ENCODE measurements at regions of chr2 and their contacts with region 1.

Region 1: DNA sequence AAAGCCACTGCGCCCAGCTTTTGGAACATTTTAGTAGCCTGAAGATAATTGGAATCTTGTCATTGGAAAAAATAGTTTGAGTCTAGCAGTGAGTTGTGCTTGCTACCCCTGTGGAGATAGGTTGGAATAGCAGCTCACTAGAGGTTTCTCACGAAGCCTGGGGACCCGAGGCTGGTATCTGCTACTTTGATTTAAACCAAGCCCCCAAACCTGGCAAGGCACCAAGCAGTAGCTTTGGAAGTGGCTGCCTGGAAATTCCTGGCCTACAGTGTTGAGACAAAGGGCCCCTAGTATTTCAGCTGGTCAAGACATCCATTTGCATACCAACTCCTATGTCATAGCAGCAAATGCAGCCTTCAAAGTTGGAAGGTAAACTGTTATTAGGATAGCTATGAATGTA is 42.1 kb downstream of the NOP58 start:
- DNase-seq: no peak
- H3K4me3 ChIP-seq: no peak overlapping the region
- H3K4me3 Mint-ChIP-seq: no peak overlapping the region
- H3K27ac Mint-ChIP-seq: no peak overlapping the region
- H3K4me1 ChIP-seq: no peaks in the 10 kb centered on the region
- H3K4me1 Mint-ChIP-seq: no peaks in the 10 kb centered on the region
- H3K27me3 ChIP-seq: no peaks in the 10 kb centered on the region
- H3K27me3 Mint-ChIP-seq: no peaks in the 10 kb centered on the region
- CTCF ChIP-seq: no peak

Region 2: DNA sequence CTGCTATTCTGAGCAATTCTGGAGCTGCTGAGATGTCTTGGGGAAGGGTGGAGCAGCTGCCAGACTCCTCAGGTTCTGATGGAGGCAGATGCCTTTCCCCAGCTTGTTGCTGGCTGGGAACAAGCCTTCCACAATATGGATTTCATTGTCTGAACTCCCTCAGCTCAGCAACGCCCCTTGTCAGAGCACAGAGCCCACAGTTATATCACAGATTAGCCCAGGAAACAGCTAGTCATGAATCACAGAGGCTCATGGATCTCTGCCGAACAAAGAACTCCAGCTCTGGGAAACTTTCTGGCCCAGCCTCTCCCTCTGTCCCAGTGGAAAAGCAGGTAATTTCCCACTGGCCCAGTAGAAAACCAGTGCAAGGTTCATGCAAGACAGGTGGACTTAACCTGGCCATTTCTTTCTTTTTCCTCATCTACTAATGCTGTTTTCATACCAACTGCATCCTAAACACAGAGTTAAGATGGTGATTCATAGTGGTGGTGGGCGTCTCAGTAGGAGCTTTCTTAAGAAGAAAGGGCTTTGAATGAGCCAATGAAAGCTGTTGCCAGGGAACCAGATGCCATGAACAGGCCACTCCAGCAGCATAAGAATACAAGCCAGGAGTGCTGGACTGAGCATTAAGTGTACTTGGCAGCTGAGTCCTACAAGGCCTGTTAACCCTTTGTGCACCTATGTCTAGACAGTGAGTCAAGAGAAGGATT is 243.4 kb before region 1 on chr2:
- CTCF ChIA-PET with region 1: no interaction called
- POLR2A ChIA-PET with region 1: no interaction called
- intact Hi-C with region 1: no loop called
- DNase-seq: no peak
- H3K4me3 ChIP-seq: no peak overlapping the region
- H3K4me3 Mint-ChIP-seq: no peak overlapping the region
- H3K27ac Mint-ChIP-seq: no peak overlapping the region
- H3K4me1 ChIP-seq: no peaks in the 10 kb centered on the region
- H3K4me1 Mint-ChIP-seq: no peaks in the 10 kb centered on the region
- H3K27me3 ChIP-seq: no peaks in the 10 kb centered on the region
- H3K27me3 Mint-ChIP-seq: no peaks in the 10 kb centered on the region
- CTCF ChIP-seq: no peak

Region 3: GRCh38 chr2:202196727-202197126 is 111.0 kb before region 1 on chr2:
- CTCF ChIA-PET with region 1: no interaction called
- POLR2A ChIA-PET with region 1: no interaction called
- intact Hi-C with region 1: no loop called
- DNase-seq: no peak
- H3K4me3 ChIP-seq: no peak overlapping the region
- H3K4me3 Mint-ChIP-seq: no peak overlapping the region
- H3K27ac Mint-ChIP-seq: no peak overlapping the region
- H3K4me1 ChIP-seq: no peaks in the 10 kb centered on the region
- H3K4me1 Mint-ChIP-seq: no peaks in the 10 kb centered on the region
- H3K27me3 ChIP-seq: no peaks in the 10 kb centered on the region
- H3K27me3 Mint-ChIP-seq: no peaks in the 10 kb centered on the region
- CTCF ChIP-seq: no peak

Region 4: GRCh38 chr2:202327858-202328257 is 20.2 kb after region 1 on chr2:
- CTCF ChIA-PET with region 1: no interaction called
- POLR2A ChIA-PET with region 1: no interaction called
- intact Hi-C with region 1: no loop called
- DNase-seq: no peak
- H3K4me3 ChIP-seq: no peak overlapping the region
- H3K4me3 Mint-ChIP-seq: no peak overlapping the region
- H3K27ac Mint-ChIP-seq: no peak overlapping the region
- H3K4me1 ChIP-seq: 0 out of 2 replicates have a peak, but pooled peaks cover 6% of the 10 kb centered on the region
- H3K4me1 Mint-ChIP-seq: no peaks in the 10 kb centered on the region
- H3K27me3 ChIP-seq: no peaks in the 10 kb centered on the region
- H3K27me3 Mint-ChIP-seq: no peaks in the 10 kb centered on the region
- CTCF ChIP-seq: no peak

Region 5: GRCh38 chr2:202339071-202339870 is 31.6 kb after region 1 on chr2:
- CTCF ChIA-PET with region 1: no interaction called
- POLR2A ChIA-PET with region 1: no interaction called
- intact Hi-C with region 1: no loop called
- DNase-seq: peak in 1 of 2 experiments; percentile 21
- H3K4me3 ChIP-seq: no peak overlapping the region
- H3K4me3 Mint-ChIP-seq: no peak overlapping the region
- H3K27ac Mint-ChIP-seq: no peak overlapping the region
- H3K4me1 ChIP-seq: no peaks in the 10 kb centered on the region
- H3K4me1 Mint-ChIP-seq: no peaks in the 10 kb centered on the region
- H3K27me3 ChIP-seq: no peaks in the 10 kb centered on the region
- H3K27me3 Mint-ChIP-seq: no peaks in the 10 kb centered on the region
- CTCF ChIP-seq: no peak

Region 6: DNA sequence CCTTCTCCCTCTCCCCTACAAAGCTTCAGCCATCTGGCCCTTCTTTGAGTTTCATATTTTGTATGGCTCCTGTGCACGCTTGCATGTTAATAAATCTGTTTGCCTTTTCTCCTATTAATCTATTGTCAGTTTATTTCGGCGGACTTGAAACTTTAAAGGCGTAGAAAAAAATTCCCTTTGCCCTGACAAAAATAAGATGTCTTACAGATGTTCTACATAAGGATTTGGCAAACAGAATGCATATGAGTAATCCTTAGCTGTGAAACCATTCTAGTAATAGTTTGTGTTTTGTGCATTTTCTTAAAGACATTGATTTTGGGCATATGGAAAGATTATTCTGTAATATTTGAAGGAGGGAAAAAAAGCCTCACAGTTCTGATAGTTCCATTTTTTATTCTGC is 53.4 kb after region 1 on chr2:
- CTCF ChIA-PET with region 1: no interaction called
- POLR2A ChIA-PET with region 1: no interaction called
- intact Hi-C with region 1: loop called (anchors 5 kb)
- DNase-seq: no peak
- H3K4me3 ChIP-seq: no peak overlapping the region
- H3K4me3 Mint-ChIP-seq: no peak overlapping the region
- H3K27ac Mint-ChIP-seq: peak overlapping the region; percentile 54
- H3K4me1 ChIP-seq: peaks cover 24% of the 10 kb centered on the region
- H3K4me1 Mint-ChIP-seq: peaks cover 13% of the 10 kb centered on the region
- H3K27me3 ChIP-seq: no peaks in the 10 kb centered on the region
- H3K27me3 Mint-ChIP-seq: no peaks in the 10 kb centered on the region
- CTCF ChIP-seq: no peak

Region 7: DNA sequence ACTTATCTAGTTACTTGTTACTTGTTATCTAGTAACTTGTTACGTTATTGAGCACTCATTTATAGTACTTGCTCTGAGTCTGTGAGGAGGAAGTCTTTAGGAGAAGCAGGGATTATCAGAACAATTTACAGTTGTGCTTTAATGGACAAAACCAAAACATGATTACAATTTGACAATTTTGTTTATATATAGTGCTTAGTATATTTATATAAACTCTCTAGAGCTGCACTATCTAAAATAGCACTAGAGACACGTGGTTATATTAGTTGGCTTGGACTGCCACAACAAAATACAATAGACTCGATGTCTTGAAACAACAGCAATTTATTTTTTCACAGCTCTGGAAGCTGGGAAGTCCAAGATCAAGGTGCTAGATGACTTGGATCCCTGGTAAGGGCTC is 146.8 kb after region 1 on chr2:
- CTCF ChIA-PET with region 1: no interaction called
- POLR2A ChIA-PET with region 1: interaction called, 12 read pairs
- intact Hi-C with region 1: no loop called
- DNase-seq: no peak
- H3K4me3 ChIP-seq: no peak overlapping the region
- H3K4me3 Mint-ChIP-seq: no peak overlapping the region
- H3K27ac Mint-ChIP-seq: no peak overlapping the region
- H3K4me1 ChIP-seq: no peaks in the 10 kb centered on the region
- H3K4me1 Mint-ChIP-seq: peaks cover 5% of the 10 kb centered on the region
- H3K27me3 ChIP-seq: no peaks in the 10 kb centered on the region
- H3K27me3 Mint-ChIP-seq: no peaks in the 10 kb centered on the region
- CTCF ChIP-seq: no peak

Measured in Caco-2 (cell line).